HEK293 (cell line): ENCODE measurements at regions of chr4 and their contacts with region 1.

Region 1: DNA sequence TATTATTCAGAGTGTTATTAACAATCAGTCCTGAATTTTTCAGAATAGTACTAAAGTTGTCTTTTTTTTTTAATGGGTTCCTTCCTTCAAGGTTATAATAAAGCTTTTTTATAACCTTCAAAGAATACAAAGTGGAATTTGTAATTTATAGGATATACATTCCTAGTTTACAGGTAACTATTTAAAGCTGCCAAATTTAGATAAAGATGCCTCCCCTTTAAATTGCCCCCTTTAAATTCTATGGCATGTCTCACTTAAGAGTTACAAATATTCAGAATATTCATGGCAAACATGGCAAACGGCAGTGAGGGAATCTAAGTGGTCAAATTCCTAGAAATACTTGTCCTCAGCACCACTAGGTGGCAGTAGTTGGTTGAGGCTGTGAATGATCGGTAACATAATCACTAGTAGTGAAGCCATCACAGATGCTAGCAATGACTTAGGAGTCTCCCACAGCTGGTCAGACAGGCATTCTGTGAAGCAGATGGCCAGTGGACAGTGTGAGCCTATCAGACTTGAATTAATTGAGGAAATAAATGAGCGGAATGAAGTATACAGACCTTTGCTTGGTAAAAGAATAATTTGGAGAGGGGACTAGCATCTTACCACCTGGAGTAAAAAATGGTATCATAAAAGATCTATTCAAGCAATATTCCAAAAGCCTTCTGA is 86.4 kb downstream of the CBR4 start:
- H3K4me3 ChIP-seq: no peak overlapping the region
- H3K27ac ChIP-seq: no peak overlapping the region
- H3K4me1 ChIP-seq: no peaks in the 10 kb centered on the region
- CTCF ChIP-seq: peak; percentile 44; the same call in 1 of the 2 replicates

Region 2: GRCh38 chr4:168183717-168184608 is 739.7 kb before region 1 on chr4:
- CTCF ChIA-PET with region 1: interaction called, 11 read pairs
- POLR2A ChIA-PET with region 1: no interaction called
- H3K4me3 ChIP-seq: no peak overlapping the region
- H3K27ac ChIP-seq: no peak overlapping the region
- H3K4me1 ChIP-seq: no peaks in the 10 kb centered on the region
- CTCF ChIP-seq: no peak

Region 3: DNA sequence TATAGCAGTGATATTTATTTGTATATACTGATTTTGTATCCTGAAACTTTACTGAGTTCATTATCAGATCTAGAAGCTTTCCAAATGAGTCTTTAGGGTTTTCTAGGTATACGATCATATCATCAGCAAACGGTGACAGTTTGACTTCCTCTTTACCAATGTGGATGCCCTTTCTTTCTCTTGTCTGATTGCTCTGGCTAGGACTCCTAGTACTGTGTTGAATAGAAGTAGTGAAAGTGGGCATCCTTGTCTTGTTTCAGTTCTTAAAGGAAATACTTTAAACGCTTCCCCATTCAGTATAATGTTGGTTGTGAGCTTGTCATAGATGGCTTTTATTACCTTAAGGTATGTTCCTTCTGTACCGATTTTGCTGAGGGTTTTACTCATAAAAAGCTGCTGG is 48.9 kb after region 1 on chr4:
- CTCF ChIA-PET with region 1: no interaction called
- POLR2A ChIA-PET with region 1: no interaction called
- H3K4me3 ChIP-seq: no peak overlapping the region
- H3K27ac ChIP-seq: no peak overlapping the region
- H3K4me1 ChIP-seq: no peaks in the 10 kb centered on the region
- CTCF ChIP-seq: no peak

Region 4: DNA sequence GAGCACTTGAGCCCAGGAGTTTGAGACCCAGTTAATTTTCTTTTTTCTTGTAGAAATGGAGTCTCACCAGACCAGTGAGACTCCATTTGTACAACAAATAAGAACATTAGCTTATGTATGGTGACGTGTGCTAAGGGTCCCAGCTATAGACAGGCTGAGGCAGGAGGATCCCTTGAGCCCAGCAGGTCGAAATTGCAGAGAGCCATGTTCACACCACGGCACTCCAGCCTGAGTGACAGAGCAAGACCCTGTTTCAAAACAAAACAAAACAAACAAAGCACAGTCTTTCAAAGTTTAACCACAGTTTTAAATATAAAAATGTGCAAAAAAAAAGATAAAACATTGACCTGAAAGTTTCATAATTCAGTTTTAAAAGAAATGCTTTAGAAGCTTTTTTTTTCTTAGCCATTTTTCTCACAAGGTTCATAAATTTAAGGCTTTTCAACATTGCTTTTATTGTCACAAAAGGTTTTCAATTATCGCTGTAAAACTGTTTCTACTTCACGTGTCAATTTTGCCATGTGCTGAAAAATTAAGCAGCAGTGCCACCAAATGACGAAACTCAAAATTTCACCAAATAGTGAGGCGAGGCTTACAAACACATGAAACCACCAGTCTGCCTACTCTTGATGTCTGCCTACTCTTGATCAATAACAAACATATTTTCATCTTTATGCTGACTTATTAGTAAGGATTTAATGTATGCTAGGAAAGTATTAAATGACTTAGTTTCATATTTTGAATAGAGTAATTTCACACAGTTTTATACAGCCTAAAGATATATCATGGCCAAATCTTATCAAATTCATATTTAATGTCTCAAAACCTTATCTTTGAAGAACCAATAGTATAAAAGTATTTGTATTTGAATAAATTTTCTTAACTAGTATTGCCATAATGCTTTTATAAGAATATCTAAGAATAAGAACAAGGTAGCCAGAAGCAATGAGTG is 562.4 kb after region 1 on chr4:
- CTCF ChIA-PET with region 1: interaction called, 24 read pairs
- POLR2A ChIA-PET with region 1: no interaction called
- H3K4me3 ChIP-seq: no peak overlapping the region
- H3K27ac ChIP-seq: no peak overlapping the region
- H3K4me1 ChIP-seq: 0 out of 2 replicates have a peak, but pooled peaks cover 2% of the 10 kb centered on the region
- CTCF ChIP-seq: no peak

Region 5: GRCh38 chr4:169566021-169566818 is 642.6 kb after region 1 on chr4:
- CTCF ChIA-PET with region 1: interaction called, 17 read pairs
- POLR2A ChIA-PET with region 1: no interaction called
- H3K4me3 ChIP-seq: no peak overlapping the region
- H3K27ac ChIP-seq: no peak overlapping the region
- H3K4me1 ChIP-seq: no peaks in the 10 kb centered on the region
- CTCF ChIP-seq: no peak